Activated CD4-positive, alpha-beta T cell treated with anti-CD3 and anti-CD28 coated beads for 36 hours (primary cell): ENCODE measurements at regions of chr17 and their contacts with region 1.

Region 1: GRCh38 chr17:14203388-14203787 is 33.3 kb downstream of the CDRT15 start:
- DNase-seq: peak; percentile 60
- ATAC-seq: peak; percentile 55
- H3K4me3 Mint-ChIP-seq: no peak overlapping the region
- H3K27ac Mint-ChIP-seq: peak overlapping the region; percentile 71
- H3K4me1 Mint-ChIP-seq: peaks cover 83% of the 10 kb centered on the region
- H3K27me3 Mint-ChIP-seq: no peaks in the 10 kb centered on the region

Region 2: GRCh38 chr17:14069251-14070021 is 134.0 kb before region 1 on chr17 and contains the start of gene COX10:
- CTCF ChIA-PET with region 1: interaction called, 4 read pairs
- POLR2A ChIA-PET with region 1: no interaction called
- intact Hi-C with region 1: loop called (anchors 1 to 5 kb)
- DNase-seq: peak; percentile 91
- ATAC-seq: peak; percentile 93
- H3K4me3 Mint-ChIP-seq: peak within 1 kb of the TSS; percentile 94
- H3K27ac Mint-ChIP-seq: peak within 1 kb of the TSS; percentile 94
- H3K4me1 Mint-ChIP-seq: peaks cover 54% of the 10 kb centered on the region
- H3K27me3 Mint-ChIP-seq: no peaks in the 10 kb centered on the region
- total RNA-seq, gene COX10: 22.0 to 32.5 TPM

Region 3: DNA sequence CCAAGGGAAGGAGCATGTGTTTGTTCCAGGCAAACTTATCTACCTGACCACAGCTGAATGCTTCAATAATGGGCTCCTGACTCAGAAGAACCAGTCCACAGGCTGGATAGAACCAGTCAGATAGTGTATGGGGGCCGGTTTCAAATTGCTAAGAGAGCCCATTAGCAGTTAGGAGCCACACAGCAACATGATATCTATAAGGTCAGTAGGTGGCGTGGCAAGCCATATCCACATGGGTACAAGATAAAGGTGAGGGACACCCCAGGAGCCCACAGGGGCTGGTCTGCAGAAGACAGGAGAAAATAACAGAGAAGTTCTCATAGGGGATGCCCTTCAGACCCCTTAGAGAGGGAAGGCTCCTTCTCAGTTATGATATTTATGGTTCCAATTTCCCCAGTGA is 64.9 kb after region 1 on chr17:
- CTCF ChIA-PET with region 1: no interaction called
- POLR2A ChIA-PET with region 1: no interaction called
- intact Hi-C with region 1: no loop called
- DNase-seq: peak; percentile 9
- ATAC-seq: no peak
- H3K4me3 Mint-ChIP-seq: no peak overlapping the region
- H3K27ac Mint-ChIP-seq: no peak overlapping the region
- H3K4me1 Mint-ChIP-seq: no peaks in the 10 kb centered on the region
- H3K27me3 Mint-ChIP-seq: no peaks in the 10 kb centered on the region

Region 4: GRCh38 chr17:14813649-14814365 is 610.4 kb after region 1 on chr17:
- CTCF ChIA-PET with region 1: no interaction called
- POLR2A ChIA-PET with region 1: no interaction called
- intact Hi-C with region 1: loop called in 1 of 2 experiments (anchors 5 kb)
- DNase-seq: peak; percentile 63
- ATAC-seq: no peak
- H3K4me3 Mint-ChIP-seq: no peak overlapping the region
- H3K27ac Mint-ChIP-seq: no peak overlapping the region
- H3K4me1 Mint-ChIP-seq: peaks cover 16% of the 10 kb centered on the region
- H3K27me3 Mint-ChIP-seq: peaks cover 11% of the 10 kb centered on the region